Activated T-helper 1 cell treated with anti-CD3 and anti-CD28 coated beads, Interleukin-12 subunit alpha, Interleukin-12 subunit beta, Interleukin-2, Interleukin-4 antibody, amounts not matched to agents 30 ng/mL and 10 ng/mL and 1 ng/mL, durations not matched to agents 14 hours and 24 hours and 36 hours (primary cell): ENCODE measurements at regions of chr7 and their contacts with region 1.

Region 1: DNA sequence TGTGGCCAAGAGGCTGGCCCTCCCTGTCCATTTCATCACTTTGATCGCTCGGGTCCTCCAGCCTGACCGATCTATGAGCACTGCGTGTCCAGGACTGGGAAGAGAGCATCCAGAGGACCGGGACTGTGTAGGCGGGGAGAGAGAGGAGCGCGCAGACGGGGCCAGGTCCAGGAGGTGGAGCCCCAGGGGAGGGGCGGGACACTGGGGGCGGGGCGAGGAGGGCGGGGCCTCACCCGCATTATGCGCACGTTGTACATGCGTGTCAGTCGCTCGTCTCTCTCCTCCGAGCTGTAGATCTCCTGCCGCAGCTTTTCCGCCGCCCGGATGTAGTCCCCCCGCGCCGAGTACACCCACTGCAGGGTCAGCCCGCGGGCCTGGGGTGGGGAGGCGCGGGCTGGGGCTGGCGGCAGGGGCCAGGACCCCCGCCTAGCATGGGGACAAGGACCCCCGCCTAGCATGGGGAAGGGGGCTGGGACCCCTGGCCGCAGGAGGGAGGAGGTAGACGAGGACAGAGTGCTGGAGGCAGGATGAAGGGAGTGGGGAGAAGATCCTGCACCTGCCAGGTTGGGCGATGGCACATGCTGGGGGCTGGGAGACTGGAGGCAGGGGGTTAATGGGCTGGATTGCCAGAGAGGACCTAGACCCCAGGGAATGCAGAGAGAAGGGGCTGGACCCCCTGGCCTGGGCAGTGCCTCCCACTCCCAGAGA is 14.3 kb downstream of the MOSPD3 start:
- DNase-seq: peak; percentile 79
- H3K4me3 Mint-ChIP-seq: peak overlapping the region; percentile 71
- H3K27ac Mint-ChIP-seq: peak overlapping the region; percentile 63
- H3K4me1 Mint-ChIP-seq: peaks cover 45% of the 10 kb centered on the region
- H3K27me3 Mint-ChIP-seq: no peaks in the 10 kb centered on the region

Region 2: DNA sequence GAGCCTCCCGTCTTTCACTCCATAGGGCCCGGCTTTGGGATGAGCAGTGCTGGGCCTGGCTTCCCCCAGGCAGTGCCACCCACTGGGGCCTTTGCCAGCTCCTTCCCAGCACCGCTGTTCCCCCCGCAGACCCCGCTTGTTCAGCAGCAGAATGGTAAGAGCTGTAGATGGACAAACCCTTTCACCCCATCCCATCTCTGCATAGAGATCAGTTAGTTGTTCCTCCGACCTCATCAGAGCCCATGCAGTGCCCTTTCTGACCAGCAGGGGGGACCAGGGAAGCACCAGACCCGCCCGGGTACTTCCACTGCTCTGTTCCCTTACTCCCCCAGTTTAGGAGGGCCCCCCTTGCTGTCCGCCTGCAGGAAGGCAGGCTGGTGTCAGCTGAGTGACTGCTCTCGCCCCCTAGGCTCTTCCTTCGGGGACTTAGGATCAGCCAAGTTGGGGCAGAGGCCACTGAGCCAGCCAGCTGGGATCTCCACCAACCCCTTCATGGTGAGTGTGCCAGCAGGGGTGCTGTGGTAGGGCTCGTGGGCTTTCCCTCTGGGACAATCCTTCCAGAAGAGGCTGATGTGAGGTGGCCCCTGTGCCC is 62.8 kb before region 1 on chr7:
- intact Hi-C with region 1: no loop called
- DNase-seq: peak; percentile 69
- H3K4me3 Mint-ChIP-seq: no peak overlapping the region
- H3K27ac Mint-ChIP-seq: peak overlapping the region; percentile 24
- H3K4me1 Mint-ChIP-seq: peaks cover 33% of the 10 kb centered on the region
- H3K27me3 Mint-ChIP-seq: no peaks in the 10 kb centered on the region

Region 3: GRCh38 chr7:100604028-100604975 is 22.4 kb before region 1 on chr7:
- intact Hi-C with region 1: loop called (anchors 1 kb)
- DNase-seq: peak; percentile 61
- H3K4me3 Mint-ChIP-seq: peak overlapping the region; percentile 81
- H3K27ac Mint-ChIP-seq: peak overlapping the region; percentile 84
- H3K4me1 Mint-ChIP-seq: peaks cover 15% of the 10 kb centered on the region
- H3K27me3 Mint-ChIP-seq: peaks cover 13% of the 10 kb centered on the region

Region 4: DNA sequence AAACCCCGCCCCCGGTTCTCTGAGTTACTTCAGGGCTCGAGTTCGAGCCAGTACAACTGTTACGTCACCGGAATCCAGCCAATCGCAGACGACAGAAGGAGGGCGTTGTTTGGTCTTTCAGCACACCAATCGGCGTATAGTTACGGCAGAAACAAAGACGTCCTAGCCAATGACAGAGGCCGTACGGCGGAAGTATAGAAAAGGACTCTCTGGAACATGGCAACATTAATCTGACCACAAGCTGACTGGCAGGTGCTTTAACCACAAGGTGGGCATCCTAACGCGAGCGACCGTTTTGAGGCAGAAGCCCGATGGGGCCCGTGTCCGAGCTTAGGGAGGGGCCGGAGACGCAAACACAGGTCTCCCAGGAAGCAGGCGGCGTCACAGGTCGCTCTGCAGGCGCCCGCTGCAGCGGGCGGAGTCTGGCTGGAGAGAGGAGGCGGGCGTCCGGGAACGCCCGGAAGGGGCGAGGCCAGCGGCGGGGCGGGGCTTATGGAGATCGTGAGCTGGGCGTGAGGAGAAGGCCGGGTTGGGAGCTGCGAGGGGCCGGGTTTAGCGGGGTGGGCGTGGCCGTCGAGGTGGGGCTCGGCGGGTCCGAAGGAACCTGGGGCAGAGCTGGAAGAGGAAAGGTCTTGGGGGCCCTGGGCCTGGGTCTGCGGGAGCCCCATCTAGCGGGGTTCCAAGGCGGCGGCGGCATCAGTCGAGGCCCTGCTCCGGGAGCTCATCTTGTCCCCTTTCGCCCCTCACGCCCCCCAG is 14.5 kb before region 1 on chr7 and contains the start of gene MOSPD3:
- intact Hi-C with region 1: loop called (anchors 1 kb)
- DNase-seq: peak; percentile 97
- H3K4me3 Mint-ChIP-seq: peak within 1 kb of the TSS; percentile 98
- H3K27ac Mint-ChIP-seq: peak within 1 kb of the TSS; percentile 100
- H3K4me1 Mint-ChIP-seq: peaks cover 22% of the 10 kb centered on the region
- H3K27me3 Mint-ChIP-seq: peaks cover 8% of the 10 kb centered on the region
- total RNA-seq, gene MOSPD3: 10.3 and 11.5 TPM in 2 replicates